ENCODE measurements at regions of chr2 and their contacts with region 1.

Region 1: DNA sequence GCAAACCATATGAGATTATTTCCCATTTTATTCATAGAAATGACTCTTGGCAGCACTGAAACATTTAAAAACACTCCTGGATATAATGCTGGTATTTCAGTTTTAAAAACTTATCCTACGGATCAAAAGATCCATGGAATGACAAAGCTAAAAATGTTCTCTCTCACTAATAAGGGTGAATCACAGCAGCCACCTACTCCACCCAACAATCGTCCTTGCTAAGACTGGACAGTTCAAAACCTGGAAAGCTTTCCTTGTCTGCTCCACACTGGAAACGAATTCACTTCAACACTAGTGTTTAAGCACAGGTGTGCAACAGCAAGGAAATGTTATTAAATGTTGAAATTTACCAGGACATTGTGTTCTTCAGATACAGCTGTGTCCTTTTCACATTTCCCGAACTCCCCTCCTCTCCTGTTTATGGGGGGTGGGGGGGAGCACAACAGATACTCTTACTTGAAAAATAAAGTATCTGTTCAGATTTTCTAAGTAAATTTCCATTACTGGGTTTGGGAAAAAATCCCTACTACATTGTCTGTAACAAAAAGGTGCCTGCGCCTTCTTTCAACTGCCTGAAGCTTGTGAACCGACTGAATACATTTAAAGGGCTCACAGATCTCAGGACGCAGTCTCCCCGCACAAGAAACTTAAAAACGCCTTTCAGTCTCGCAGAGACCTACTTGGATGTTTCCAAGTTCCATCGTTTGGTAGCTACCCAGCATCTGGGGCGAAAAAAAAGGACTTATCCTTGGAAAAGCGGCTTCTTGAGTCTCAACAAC is 1.4 kb downstream of the YWHAQ start:
- DNase-seq: no peak
- ATAC-seq: peak; percentile 23

Region 2: DNA sequence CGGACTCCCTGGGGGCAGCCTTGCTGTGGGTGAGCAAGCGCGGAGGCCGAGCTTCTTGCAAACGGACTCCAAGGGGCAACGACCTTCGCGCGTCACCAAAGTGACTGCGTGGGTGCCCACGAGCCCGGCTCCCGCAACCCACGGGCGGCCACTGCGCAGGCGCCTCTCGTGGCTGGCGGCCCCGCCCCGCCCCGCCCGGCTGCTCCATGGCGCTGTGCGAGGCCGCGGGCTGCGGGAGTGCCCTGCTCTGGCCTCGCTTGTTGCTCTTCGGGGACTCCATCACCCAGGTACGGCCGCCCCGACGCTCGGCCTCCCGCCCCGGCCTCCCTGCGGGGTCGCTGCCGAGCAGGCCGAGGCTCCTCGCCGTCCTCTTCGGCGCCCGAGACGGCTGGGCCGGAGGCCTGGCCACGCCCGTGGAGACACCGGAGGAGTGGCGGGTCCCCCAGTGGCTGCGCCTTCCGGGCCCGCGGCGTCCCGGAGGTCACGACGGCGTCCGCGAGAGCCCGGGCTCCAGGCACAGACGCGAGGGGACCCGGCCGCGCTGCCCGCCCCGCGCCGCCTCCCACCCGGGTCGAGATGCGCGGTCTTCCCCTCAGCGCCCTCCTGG is 154.9 kb before region 1 on chr2 and contains the start of gene IAH1:
- intact Hi-C with region 1: no loop called
- DNase-seq: peak; percentile 49 to 79
- ATAC-seq: peak; percentile 82
- total RNA-seq, gene IAH1: 44.7 to 47.5 TPM

Region 3: GRCh38 chr2:9555297-9556141 is 73.9 kb before region 1 on chr2 and contains the start of gene ADAM17:
- intact Hi-C with region 1: loop called in 1 of 2 experiments (anchors 10 kb)
- DNase-seq: peak; percentile 97
- ATAC-seq: peak; percentile 93
- total RNA-seq, gene ADAM17: 21.3 to 22.0 TPM

Measured in left colon (tissue), 2 donors.